ENCODE measurements at regions of chr16 and their contacts with region 1.

Region 1: DNA sequence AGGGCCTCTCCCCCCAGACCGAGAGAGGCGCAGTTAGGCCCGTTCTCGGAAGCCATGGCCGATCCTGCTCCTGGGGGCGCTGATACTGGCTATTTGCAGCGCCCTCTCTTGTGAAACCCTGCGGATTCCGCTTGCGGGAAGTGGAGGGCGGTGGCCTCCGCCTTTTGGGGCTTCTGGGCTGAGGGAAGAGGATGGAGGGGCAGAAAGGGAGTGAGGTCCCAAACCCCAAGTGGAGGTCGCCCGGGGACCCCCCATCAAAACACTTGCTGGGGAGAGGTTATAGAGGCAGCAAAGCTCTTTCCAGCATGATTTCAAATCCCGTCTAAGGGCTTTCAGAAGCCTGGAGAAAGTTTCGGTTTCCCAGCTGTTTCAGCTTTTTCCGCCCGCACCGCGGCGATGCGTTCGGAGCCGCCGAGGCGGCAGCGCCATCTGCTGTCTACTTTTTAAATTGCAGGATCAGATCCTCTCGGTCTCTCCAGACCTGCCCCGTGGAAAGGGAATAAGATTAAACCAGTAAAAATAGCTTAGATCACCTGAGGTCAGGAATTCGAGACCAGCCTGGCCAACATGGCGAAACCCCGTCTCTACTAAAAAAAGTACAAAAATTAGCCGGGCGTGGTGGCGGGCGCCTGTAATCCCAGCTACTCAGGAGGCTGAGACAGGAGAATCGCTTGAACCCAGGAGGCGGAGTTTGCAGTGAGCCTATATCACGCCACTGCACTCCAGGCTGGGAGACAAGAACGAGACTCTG is 15.8 kb downstream of the SNX20 start:
- DNase-seq: peak; percentile 84
- H3K4me3 ChIP-seq: peak overlapping the region in 1 of 2 experiments; percentile 45; a peak in 2 of 4 replicates
- H3K27ac ChIP-seq: no peak overlapping the region
- H3K4me1 ChIP-seq: no peaks in the 10 kb centered on the region; a peak in 1 of 4 replicates
- H3K27me3 ChIP-seq: no peaks in the 10 kb centered on the region
- CTCF ChIP-seq: peak; percentile 79
- EP300 ChIP-seq: no peak
- RAD21 ChIP-seq: peak; percentile 94

Region 2: DNA sequence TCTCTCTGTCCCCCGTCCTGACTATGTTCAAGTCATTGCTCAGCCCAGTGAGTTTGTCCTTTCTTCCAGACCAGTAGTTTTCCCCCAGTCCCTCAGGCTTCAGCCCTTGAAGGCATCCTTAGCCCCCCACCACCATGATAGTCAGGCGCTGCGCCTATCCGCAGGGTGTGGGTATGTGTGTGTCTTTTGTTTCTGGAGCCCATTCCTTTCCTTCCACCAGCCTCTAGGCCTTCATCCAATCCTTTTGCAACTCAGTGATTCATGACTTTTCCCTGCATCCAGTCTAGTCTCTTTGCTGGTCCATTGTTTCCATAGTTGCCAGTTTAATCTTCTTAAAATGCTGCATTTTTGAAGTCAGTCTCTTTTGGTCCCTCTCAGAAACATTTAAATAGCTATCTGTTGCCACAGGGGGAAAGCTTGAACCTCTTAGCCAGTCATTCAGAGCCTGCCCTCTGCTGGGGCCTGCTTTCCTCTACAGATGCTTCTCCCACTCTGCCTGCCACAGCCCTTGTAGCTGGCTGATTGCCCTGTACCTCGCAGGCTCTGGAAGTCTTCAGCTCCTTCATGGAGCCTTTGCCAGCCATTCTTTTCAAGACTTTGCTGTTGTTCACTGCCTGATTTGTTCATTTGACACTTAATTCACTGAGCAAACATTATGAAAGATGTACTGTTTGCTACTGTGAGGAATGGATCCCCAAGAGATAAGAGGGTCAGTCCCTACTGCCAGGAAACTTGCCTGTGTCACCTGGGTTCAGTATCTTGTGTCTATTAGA is 454.9 kb before region 1 on chr16:
- CTCF ChIA-PET with region 1: interaction called, 26 read pairs
- POLR2A ChIA-PET with region 1: no interaction called
- DNase-seq: peak; percentile 68
- H3K4me3 ChIP-seq: no peak overlapping the region; a peak in 1 of 4 replicates
- H3K27ac ChIP-seq: peak overlapping the region; percentile 47 to 71
- H3K4me1 ChIP-seq: peaks cover 29 to 35% of the 10 kb centered on the region in 2 experiments
- H3K27me3 ChIP-seq: no peaks in the 10 kb centered on the region
- CTCF ChIP-seq: peak; percentile 83
- EP300 ChIP-seq: no peak
- RAD21 ChIP-seq: peak; percentile 87

Region 3: GRCh38 chr16:50360033-50360778 is 305.1 kb before region 1 on chr16:
- CTCF ChIA-PET with region 1: interaction called, 326 read pairs
- POLR2A ChIA-PET with region 1: no interaction called
- DNase-seq: no peak
- H3K4me3 ChIP-seq: no peak overlapping the region
- H3K27ac ChIP-seq: peak overlapping the region in 1 of 2 experiments; percentile 22; a peak in 1 of 4 replicates
- H3K4me1 ChIP-seq: peaks cover 0 to 6% of the 10 kb centered on the region in 2 experiments; a peak in 2 of 4 replicates
- H3K27me3 ChIP-seq: no peaks in the 10 kb centered on the region
- CTCF ChIP-seq: no peak
- EP300 ChIP-seq: no peak
- RAD21 ChIP-seq: no peak

Region 4: GRCh38 chr16:50509521-50510341 is 155.6 kb before region 1 on chr16:
- CTCF ChIA-PET with region 1: interaction called, 11 read pairs
- POLR2A ChIA-PET with region 1: no interaction called
- DNase-seq: peak; percentile 47
- H3K4me3 ChIP-seq: peak overlapping the region in 1 of 2 experiments; percentile 9; a peak in 1 of 4 replicates
- H3K27ac ChIP-seq: no peak overlapping the region
- H3K4me1 ChIP-seq: peaks cover 0 to 5% of the 10 kb centered on the region in 2 experiments; a peak in 1 of 4 replicates
- H3K27me3 ChIP-seq: no peaks in the 10 kb centered on the region
- CTCF ChIP-seq: peak; percentile 66
- EP300 ChIP-seq: no peak
- RAD21 ChIP-seq: peak; percentile 70

Region 5: DNA sequence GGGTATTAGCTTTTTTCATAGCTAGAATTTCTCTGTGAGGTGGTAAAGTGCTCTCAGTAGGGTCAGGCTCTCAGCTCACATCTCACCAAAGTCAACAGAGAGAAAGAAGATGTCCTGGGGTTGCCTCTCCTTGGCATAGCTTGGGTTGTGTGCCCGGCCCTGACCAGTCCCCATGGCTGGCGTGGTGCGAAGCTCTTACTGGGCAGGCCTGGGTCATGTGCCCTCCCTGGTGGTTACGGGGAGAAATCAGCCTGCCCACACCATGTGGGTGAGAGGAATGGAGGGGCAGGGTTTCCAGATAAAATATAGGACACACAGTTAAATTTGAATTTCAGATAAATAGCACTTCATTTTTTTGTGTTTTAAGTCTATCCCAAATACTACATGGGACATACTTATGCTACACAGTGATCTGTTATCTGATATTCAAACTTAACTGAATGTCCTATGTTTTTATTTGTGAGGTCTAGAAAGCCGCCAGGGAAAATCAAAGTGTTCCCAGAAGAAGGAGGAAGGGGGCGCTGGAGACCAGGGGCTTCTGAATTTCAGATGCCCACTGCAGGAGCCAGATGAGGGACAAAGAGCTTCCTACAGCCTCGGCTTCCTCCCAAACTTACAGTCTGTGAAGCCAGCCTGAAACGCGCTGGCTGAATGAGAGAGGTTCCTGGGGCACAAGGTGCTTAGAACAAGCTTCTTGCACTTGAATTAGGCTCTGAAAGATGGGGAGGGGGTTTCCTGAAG is 71.7 kb before region 1 on chr16:
- CTCF ChIA-PET with region 1: interaction called, 29 read pairs
- POLR2A ChIA-PET with region 1: no interaction called
- DNase-seq: peak; percentile 48
- H3K4me3 ChIP-seq: no peak overlapping the region; a peak in 1 of 4 replicates
- H3K27ac ChIP-seq: no peak overlapping the region
- H3K4me1 ChIP-seq: peaks cover 0 to 25% of the 10 kb centered on the region in 2 experiments; a peak in 1 of 4 replicates
- H3K27me3 ChIP-seq: no peaks in the 10 kb centered on the region
- CTCF ChIP-seq: peak; percentile 33; the same call in 1 of the 2 replicates
- EP300 ChIP-seq: no peak
- RAD21 ChIP-seq: peak; percentile 50

Region 6: DNA sequence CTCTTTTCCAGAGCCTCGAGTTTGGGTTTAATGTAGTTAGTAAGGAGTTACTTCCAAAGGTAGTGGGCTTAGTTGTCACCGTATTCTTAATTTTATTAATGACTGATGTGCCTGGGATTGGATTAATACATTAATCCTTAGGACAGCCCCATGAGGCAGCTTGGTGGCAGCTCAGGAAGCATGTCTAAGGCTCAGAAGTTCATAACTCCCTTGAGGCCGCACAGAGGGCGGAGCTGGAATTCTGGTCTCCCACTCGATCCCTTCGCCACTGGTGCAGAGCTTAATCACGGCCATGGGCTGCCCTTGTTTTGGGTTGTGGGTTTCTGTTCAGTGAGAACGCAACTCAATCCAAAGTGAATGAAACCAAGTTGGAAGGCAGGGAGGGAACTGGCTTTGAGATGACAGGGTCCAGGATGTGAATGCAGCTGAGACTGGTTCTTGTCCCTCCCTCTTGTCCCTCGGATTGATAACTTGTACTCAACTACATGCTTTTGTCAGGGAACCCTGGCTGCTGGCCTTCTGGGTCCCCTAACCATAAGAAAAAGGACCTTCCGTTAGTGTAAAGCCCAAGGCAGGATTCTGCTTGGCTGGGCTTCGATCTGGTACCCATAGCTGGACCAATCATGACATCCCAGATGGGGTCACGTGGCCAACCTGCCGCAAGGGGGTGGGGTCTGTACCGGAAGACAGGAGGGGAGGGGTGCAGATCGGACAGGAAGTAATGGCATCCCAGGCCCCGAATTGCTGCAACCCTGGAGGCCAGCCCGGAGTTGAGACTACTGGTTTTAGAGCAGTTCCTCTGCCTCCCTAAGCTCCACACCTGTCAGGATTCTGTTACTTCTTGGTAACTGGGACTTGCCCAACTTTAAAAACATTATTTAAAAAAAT is 29.6 kb before region 1 on chr16:
- CTCF ChIA-PET with region 1: interaction called, 17 read pairs
- POLR2A ChIA-PET with region 1: no interaction called
- DNase-seq: peak; percentile 53
- H3K4me3 ChIP-seq: no peak overlapping the region
- H3K27ac ChIP-seq: no peak overlapping the region
- H3K4me1 ChIP-seq: no peaks in the 10 kb centered on the region; a peak in 1 of 4 replicates
- H3K27me3 ChIP-seq: no peaks in the 10 kb centered on the region
- CTCF ChIP-seq: no peak
- EP300 ChIP-seq: no peak
- RAD21 ChIP-seq: no peak